ENCODE measurements at regions of chr2 and their contacts with region 1.

Region 1: DNA sequence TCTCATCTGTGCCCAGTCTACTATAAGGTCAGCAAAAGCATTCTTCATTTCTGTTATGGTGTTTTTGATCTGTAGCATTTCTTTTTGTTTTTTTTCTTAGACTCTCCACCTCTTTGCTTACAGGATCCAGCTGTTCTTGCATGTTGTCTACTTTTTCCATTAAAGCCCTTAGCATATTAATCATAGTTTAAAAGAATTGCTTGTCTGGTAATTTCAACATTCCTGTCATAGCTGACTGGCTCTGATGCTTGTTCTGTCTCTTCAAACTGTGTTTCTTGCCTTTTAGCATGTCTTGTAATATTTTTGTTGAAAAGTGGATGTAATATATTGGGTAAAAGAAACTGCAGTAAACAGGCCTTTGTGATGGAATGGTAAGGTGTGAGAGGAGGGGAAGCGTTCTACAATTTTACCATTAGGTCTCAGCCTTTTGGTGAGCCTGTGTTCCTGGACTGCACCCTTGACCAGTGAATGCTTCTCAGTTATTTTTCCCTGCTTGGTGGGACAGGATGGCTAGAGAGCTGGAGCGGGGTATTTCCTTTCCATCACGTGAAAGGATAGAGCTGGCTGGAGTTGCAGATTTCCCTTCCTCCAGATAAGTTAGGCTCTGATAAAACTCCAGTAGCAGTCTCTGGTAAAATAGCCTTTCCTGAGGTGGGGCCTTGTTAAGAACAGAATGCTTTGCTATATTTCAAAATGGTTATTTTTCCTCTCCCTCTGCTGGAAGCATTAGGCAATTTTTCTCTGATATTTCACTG is 65.4 kb downstream of the PLA2R1 start:
- DNase-seq: peak; percentile 91
- H3K4me3 ChIP-seq: no peak overlapping the region
- H3K27ac ChIP-seq: no peak overlapping the region
- H3K4me1 ChIP-seq: no peaks in the 10 kb centered on the region
- H3K27me3 ChIP-seq: no peaks in the 10 kb centered on the region
- CTCF ChIP-seq: no peak
- POLR2A ChIP-seq: no peak

Region 2: GRCh38 chr2:159953136-159953823 is 43.7 kb before region 1 on chr2:
- CTCF ChIA-PET with region 1: no interaction called
- POLR2A ChIA-PET with region 1: no interaction called
- dilution Hi-C with region 1: no loop called
- intact Hi-C with region 1: no loop called
- DNase-seq: no peak
- H3K4me3 ChIP-seq: no peak overlapping the region
- H3K27ac ChIP-seq: no peak overlapping the region
- H3K4me1 ChIP-seq: no peaks in the 10 kb centered on the region
- H3K27me3 ChIP-seq: no peaks in the 10 kb centered on the region
- CTCF ChIP-seq: no peak
- POLR2A ChIP-seq: no peak

Region 3: DNA sequence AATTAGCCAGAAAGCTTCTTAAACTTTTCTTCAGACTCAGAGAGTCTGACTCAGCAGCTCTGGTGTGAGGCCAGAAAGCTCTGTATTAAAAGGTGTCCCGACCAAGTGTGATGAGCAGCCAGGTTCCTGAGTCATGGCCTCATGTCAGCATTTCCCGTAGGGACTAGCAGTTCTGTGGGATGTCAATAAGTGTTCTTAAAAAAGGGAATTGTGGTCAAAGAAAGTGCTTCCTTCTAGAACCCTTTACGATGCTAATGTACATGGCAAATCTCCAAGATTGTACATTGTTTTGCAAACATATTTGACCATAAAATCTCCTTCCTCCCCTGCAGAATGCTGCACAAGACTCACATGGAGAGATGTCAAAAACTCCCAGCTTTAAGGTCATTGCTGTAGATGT is 14.7 kb before region 1 on chr2:
- CTCF ChIA-PET with region 1: interaction called, 14 read pairs
- POLR2A ChIA-PET with region 1: no interaction called
- dilution Hi-C with region 1: no loop called
- intact Hi-C with region 1: no loop called
- DNase-seq: peak; percentile 85
- H3K4me3 ChIP-seq: no peak overlapping the region
- H3K27ac ChIP-seq: no peak overlapping the region
- H3K4me1 ChIP-seq: peaks cover 11% of the 10 kb centered on the region
- H3K27me3 ChIP-seq: no peaks in the 10 kb centered on the region
- CTCF ChIP-seq: no peak
- POLR2A ChIP-seq: no peak

Region 4: GRCh38 chr2:160736148-160737030 is 739.4 kb after region 1 on chr2:
- CTCF ChIA-PET with region 1: no interaction called
- POLR2A ChIA-PET with region 1: no interaction called
- dilution Hi-C with region 1: no loop called
- intact Hi-C with region 1: no loop called
- DNase-seq: peak; percentile 64
- H3K4me3 ChIP-seq: no peak overlapping the region
- H3K27ac ChIP-seq: peak overlapping the region; percentile 32
- H3K4me1 ChIP-seq: peaks cover 25% of the 10 kb centered on the region
- H3K27me3 ChIP-seq: no peaks in the 10 kb centered on the region
- CTCF ChIP-seq: no peak
- POLR2A ChIP-seq: no peak